Posterior vena cava (tissue), 2 donors: ENCODE measurements at regions of chr19 and their contacts with region 1.

Region 1: GRCh38 chr19:9342610-9343304 is 18.8 kb downstream of the ZNF559 start:
- DNase-seq: no peak

Region 2: DNA sequence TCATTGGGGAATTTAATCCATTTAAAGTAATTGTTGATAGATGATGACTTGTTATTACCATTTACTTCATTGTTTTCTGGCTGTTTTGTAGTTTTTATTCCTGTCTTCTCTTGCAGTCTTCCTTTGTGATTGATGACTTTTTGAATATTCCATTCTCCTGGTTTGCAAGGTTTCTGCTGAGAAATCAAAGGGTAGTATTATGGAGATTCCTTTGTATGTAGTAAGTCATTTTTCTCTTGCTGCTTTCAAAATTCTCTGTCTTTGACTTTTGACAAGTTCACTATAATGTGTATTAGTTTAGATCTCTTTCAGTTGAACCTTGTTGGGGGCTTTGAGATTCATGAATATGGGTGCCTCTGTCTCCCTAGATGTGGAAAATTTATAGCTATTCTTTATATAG is 12.8 kb before region 1 on chr19:
- intact Hi-C with region 1: loop called in 1 of 2 experiments (anchors 1 kb)
- DNase-seq: no peak

Region 3: GRCh38 chr19:9354651-9355050 is 11.9 kb after region 1 on chr19:
- intact Hi-C with region 1: no loop called
- DNase-seq: no peak